ENCODE measurements at regions of chr7 and their contacts with region 1.

Region 1: DNA sequence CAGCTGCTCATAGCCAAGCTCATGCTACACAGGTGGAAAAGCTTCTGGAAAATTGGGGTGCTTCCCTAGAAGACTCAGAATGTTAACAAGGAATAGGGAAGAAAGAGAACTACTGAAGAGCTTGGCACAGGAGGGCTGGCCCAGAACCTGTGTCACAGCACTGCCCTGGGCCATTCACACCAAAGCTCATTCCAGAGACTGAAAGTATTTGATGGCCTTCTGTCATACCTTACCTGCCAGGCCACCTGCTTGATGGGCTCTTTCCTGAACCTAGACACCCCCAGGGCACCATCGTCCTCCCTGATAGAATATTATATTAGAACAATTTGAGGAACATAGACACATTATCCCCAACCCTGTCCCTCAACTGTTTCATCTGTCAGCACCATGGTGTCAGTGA is 24.1 kb downstream of the NPSR1 start:
- DNase-seq: no peak
- H3K4me3 Mint-ChIP-seq: no peak overlapping the region
- H3K27ac Mint-ChIP-seq: no peak overlapping the region
- H3K4me1 Mint-ChIP-seq: no peaks in the 10 kb centered on the region
- H3K27me3 Mint-ChIP-seq: peaks cover 2% of the 10 kb centered on the region

Region 2: GRCh38 chr7:34603711-34604444 is 78.2 kb before region 1 on chr7:
- CTCF ChIA-PET with region 1: no interaction called
- POLR2A ChIA-PET with region 1: no interaction called
- intact Hi-C with region 1: no loop called
- DNase-seq: no peak
- H3K4me3 Mint-ChIP-seq: no peak overlapping the region
- H3K27ac Mint-ChIP-seq: no peak overlapping the region
- H3K4me1 Mint-ChIP-seq: no peaks in the 10 kb centered on the region
- H3K27me3 Mint-ChIP-seq: peaks cover 2% of the 10 kb centered on the region

Region 3: DNA sequence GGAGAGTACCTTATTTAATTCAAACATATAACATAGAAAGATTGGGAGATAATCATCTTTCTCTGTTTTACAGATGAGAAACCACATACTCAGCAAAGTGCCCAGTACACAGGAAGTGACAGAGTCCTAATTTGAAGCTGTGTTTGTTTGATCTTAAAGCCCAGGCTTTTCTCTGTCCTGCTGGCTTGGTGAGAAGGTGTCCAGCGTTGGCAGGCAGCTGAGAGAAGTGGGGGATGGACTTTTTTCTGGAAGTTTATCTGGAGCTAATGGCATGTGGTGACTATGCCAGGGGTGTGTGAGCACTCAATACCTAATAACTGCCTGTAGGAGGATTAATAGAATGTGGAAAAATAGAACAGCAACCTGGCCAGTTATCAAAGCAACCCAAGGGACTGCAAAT is 36.8 kb after region 1 on chr7:
- CTCF ChIA-PET with region 1: no interaction called
- POLR2A ChIA-PET with region 1: no interaction called
- intact Hi-C with region 1: loop called (anchors 5 kb)
- DNase-seq: no peak
- H3K4me3 Mint-ChIP-seq: no peak overlapping the region
- H3K27ac Mint-ChIP-seq: no peak overlapping the region
- H3K4me1 Mint-ChIP-seq: peaks cover 25% of the 10 kb centered on the region
- H3K27me3 Mint-ChIP-seq: no peaks in the 10 kb centered on the region